ENCODE measurements at regions of chr3 and their contacts with region 1.

Region 1: DNA sequence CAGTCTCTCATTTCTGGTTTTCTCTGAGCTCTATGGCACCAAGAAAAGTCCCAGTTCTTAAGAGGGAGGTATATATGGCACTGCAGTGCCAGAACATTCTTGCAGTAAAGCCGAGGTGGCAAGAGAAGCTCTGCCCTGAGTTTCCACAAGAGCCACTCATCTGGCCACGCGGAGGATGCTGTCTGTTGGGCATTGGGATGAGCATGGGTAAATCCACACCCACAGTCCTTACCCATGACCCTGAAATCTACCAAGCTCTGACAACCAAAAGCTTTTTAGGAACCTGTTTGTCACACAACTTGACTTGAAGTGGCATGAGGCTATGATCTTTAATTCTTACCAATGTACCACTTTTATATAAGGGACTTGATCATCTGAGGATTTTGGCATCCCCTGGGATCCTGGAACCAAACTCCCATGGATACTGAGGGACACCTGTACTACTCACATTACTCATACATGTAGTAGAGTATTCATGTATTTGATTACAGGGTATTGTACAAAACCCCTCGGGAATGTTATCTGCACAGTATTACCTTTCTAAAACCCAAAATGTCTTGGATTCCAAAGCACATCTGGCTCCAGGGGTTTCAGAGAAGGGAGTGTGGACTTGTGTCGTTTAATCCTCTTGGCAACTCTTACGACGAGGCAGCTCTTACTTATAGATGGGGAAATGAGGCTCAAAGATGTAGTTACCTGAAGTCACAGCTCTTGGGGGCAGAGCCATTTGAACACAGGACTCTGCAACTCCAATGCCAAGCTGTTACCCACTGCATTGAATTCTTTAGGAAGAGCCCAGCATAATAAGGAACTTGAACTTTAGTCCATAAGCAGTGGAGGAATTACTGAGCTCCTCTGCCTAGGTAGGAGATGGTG is 8.8 kb downstream of the RPL32 start:
- DNase-seq: no peak
- ATAC-seq: no peak
- H3K4me3 ChIP-seq: no peak overlapping the region
- H3K4me3 Mint-ChIP-seq: no peak overlapping the region
- H3K27ac ChIP-seq: no peak overlapping the region
- H3K27ac Mint-ChIP-seq: peak overlapping the region in 1 of 2 donors; percentile 36
- H3K4me1 ChIP-seq: no peaks in the 10 kb centered on the region
- H3K4me1 Mint-ChIP-seq: peaks cover 8 to 11% (median 10%) of the 10 kb centered on the region in 3 donors
- H3K27me3 ChIP-seq: no peaks in the 10 kb centered on the region
- H3K27me3 Mint-ChIP-seq: no peaks in the 10 kb centered on the region

Region 2: GRCh38 chr3:12948891-12949711 is 116.5 kb after region 1 on chr3:
- CTCF ChIA-PET with region 1: no interaction called
- POLR2A ChIA-PET with region 1: interaction called in 1 of 2 experiments, 12 read pairs
- DNase-seq: peak in 2 of 35 experiments; percentile 7 to 32
- ATAC-seq: peak; percentile 65 to 80 (median 69)
- H3K4me3 ChIP-seq: no peak overlapping the region
- H3K4me3 Mint-ChIP-seq: no peak overlapping the region
- H3K27ac ChIP-seq: no peak overlapping the region
- H3K27ac Mint-ChIP-seq: peak overlapping the region; percentile 44 to 80
- H3K4me1 ChIP-seq: peaks cover 0 to 90% of the 10 kb centered on the region in 2 experiments
- H3K4me1 Mint-ChIP-seq: peaks cover 56 to 67% (median 61%) of the 10 kb centered on the region in 3 donors
- H3K27me3 ChIP-seq: no peaks in the 10 kb centered on the region
- H3K27me3 Mint-ChIP-seq: no peaks in the 10 kb centered on the region

Measured in T-cell (primary cell).